B cell (primary cell): ENCODE measurements at regions of chr19 and their contacts with region 1.

Region 1: DNA sequence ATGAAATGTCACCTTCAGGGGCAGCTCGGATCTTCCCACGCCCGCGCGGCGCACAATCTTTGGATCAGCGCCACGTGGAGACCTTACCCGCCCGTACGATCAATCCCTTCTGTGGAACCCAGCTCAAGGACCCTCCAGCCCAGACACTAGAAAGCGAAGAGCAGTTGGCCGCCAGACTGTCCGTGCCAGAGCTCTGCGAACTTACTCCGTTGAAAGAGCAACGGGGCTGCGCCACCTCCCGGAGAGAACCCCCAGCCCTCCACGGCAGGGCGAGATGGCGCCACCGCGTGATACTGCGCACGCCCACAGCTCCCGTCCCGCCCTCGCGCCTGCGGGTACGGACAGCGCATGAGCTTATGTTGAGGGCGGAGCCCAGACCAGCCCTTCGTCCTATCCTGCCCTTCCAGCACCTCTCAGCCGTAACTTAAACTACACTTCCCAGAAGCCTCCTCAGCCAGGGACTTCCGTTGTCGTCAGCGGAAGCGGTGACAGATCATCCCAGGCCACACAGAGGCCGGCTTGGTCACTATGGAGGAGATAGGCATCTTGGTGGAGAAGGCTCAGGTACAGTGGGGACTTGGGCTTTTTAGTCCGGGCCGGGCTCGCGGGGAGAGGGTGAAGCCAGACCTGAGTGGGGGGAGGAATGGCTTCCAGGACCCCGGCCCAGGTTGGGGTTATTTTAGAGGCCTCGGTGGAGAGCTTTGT is at the start of gene PSMC4:
- DNase-seq: peak; percentile 99
- ATAC-seq: peak; percentile 97
- H3K4me3 ChIP-seq: peak within 1 kb of the TSS; percentile 76 to 96 (median 89)
- H3K4me3 Mint-ChIP-seq: peak within 1 kb of the TSS; percentile 92
- H3K27ac ChIP-seq: peak within 1 kb of the TSS; percentile 87 to 95
- H3K27ac Mint-ChIP-seq: peak within 1 kb of the TSS; percentile 94
- H3K4me1 ChIP-seq: peaks cover 23 to 25% of the 10 kb centered on the region in 2 donors
- H3K4me1 Mint-ChIP-seq: peaks cover 48% of the 10 kb centered on the region
- H3K27me3 ChIP-seq: no peaks in the 10 kb centered on the region
- H3K27me3 Mint-ChIP-seq: no peaks in the 10 kb centered on the region
- CTCF ChIP-seq: peak; percentile 83
- total RNA-seq, gene PSMC4: 56.6 and 58.2 TPM in 2 replicates

Region 2: DNA sequence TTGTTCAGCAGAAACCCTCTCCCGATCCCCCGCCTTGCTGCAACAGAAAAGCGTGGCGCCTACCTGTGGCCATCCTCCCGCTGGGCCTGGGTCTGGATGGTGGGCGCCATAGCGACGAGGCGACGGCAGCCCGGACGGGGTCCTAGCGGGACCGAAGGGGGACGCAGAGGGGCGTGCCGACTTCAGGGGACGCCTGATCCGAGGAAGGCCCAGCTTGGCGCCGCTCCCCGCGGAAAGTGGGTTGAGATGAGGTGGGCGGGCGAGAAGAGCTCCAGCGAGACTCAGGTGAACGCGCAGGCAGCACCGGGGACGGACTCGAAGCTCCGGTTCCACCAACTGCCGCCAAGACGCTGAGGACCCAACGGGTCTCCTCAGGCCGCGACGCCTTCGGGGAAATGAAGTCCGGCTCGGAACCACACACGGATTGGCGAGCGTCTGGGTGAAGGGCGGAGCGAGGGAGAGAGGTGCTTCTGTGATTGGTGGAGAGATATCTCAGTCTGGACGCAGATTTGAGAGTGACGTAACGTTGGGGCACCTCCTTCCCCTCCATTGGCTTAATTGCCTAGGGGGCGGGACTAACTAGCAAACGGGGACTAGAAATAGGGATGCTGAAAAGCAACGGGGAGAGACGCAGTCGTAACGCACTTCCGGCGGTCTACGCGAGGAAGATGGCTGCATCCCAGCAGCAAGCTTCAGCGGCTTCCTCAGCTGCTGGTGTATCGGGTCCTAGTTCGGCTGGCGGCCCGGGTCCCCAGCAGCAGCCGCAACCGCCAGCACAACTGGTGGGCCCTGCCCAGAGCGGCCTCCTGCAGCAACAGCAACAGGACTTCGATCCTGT is 579.9 kb before region 1 on chr19 and contains the starts of genes MED29 and PAF1:
- CTCF ChIA-PET with region 1: no interaction called
- POLR2A ChIA-PET with region 1: no interaction called
- intact Hi-C with region 1: loop called (anchors 2 kb)
- DNase-seq: peak; percentile 99
- ATAC-seq: peak; percentile 90
- H3K4me3 ChIP-seq: peak within 1 kb of the TSS; percentile 73 to 99 (median 90)
- H3K4me3 Mint-ChIP-seq: peak within 1 kb of the TSS; percentile 87
- H3K27ac ChIP-seq: peak within 1 kb of the TSS; percentile 96 to 97
- H3K27ac Mint-ChIP-seq: peak within 1 kb of the TSS; percentile 99
- H3K4me1 ChIP-seq: peaks cover 16 to 28% of the 10 kb centered on the region in 2 donors
- H3K4me1 Mint-ChIP-seq: peaks cover 39% of the 10 kb centered on the region
- H3K27me3 ChIP-seq: no peaks in the 10 kb centered on the region
- H3K27me3 Mint-ChIP-seq: no peaks in the 10 kb centered on the region
- CTCF ChIP-seq: no peak
- total RNA-seq, gene MED29: 47.5 and 53.0 TPM in 2 replicates
- total RNA-seq, gene PAF1: 54.6 and 59.9 TPM in 2 replicates

Region 3: DNA sequence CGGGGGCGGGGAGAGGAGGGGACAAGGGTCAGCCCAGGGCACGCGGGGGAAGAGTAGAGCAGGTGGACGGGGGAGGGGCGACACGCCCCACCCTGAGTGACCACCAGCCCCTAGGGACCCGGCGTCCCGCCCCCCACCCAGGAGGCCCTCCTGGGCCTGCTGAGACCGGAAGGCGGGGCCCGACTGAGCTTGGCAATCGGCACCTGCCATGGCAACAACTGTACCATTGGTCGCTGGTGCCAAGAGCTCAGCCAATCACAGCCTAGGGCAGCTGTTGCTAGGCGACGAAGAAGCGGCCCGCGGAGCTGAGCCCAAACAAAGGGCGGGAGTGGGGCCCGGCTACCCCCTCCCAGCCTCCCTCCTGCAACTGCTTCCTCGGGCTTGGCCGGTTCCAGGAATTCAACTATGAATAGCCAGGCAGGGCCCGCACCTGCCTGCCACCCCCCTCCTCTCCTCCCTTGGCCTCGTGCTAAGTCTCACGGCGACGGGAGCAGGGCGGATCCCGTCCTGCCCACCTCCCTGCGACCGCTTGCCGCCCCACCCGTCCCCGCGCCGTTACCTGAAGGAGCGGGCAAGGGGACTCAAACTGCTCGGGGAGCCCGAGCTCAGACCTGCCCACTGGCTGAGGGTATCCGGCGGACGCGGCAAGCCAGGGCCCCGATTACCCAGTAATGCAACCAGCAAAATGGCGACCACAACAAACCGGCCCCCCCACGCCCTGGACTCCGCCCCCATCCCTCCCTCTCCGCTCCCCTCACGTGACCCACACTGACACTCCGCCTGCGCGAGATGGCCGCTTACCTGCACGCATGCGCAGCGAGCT is 137.2 kb before region 1 on chr19 and contains the start of gene DYRK1B:
- CTCF ChIA-PET with region 1: interaction called, 11 read pairs
- POLR2A ChIA-PET with region 1: interaction called, 5 read pairs
- intact Hi-C with region 1: loop called (anchors 2 kb)
- DNase-seq: peak; percentile 99
- ATAC-seq: peak; percentile 84
- H3K4me3 ChIP-seq: peak within 1 kb of the TSS; percentile 66 to 100 (median 98)
- H3K4me3 Mint-ChIP-seq: peak within 1 kb of the TSS; percentile 87
- H3K27ac ChIP-seq: peak within 1 kb of the TSS; percentile 94 to 99
- H3K27ac Mint-ChIP-seq: peak within 1 kb of the TSS; percentile 92
- H3K4me1 ChIP-seq: peaks cover 16 to 26% of the 10 kb centered on the region in 2 donors
- H3K4me1 Mint-ChIP-seq: peaks cover 32% of the 10 kb centered on the region
- H3K27me3 ChIP-seq: no peaks in the 10 kb centered on the region
- H3K27me3 Mint-ChIP-seq: no peaks in the 10 kb centered on the region
- CTCF ChIP-seq: no peak
- total RNA-seq, gene DYRK1B: 36.6 and 44.4 TPM in 2 replicates

Region 4: GRCh38 chr19:39916851-39917396 is 53.9 kb before region 1 on chr19:
- CTCF ChIA-PET with region 1: interaction called, 26 read pairs
- POLR2A ChIA-PET with region 1: no interaction called
- intact Hi-C with region 1: no loop called
- DNase-seq: no peak
- ATAC-seq: no peak
- H3K4me3 ChIP-seq: no peak overlapping the region
- H3K4me3 Mint-ChIP-seq: no peak overlapping the region
- H3K27ac ChIP-seq: no peak overlapping the region
- H3K27ac Mint-ChIP-seq: no peak overlapping the region
- H3K4me1 ChIP-seq: peaks cover 0 to 10% of the 10 kb centered on the region in 2 donors
- H3K4me1 Mint-ChIP-seq: peaks cover 8% of the 10 kb centered on the region
- H3K27me3 ChIP-seq: no peaks in the 10 kb centered on the region
- H3K27me3 Mint-ChIP-seq: peaks cover 3% of the 10 kb centered on the region
- CTCF ChIP-seq: no peak

Region 5: GRCh38 chr19:39951686-39952085 is 19.1 kb before region 1 on chr19:
- CTCF ChIA-PET with region 1: interaction called, 63 read pairs
- POLR2A ChIA-PET with region 1: interaction called, 29 read pairs
- intact Hi-C with region 1: loop called (anchors 1 kb)
- DNase-seq: no peak
- ATAC-seq: no peak
- H3K4me3 ChIP-seq: peak overlapping the region in 3 of 5 experiments; percentile 3 to 23 (median 7)
- H3K4me3 Mint-ChIP-seq: peak overlapping the region; percentile 84
- H3K27ac ChIP-seq: peak overlapping the region; percentile 92 to 97
- H3K27ac Mint-ChIP-seq: peak overlapping the region; percentile 92
- H3K4me1 ChIP-seq: peaks cover 75 to 84% of the 10 kb centered on the region in 2 donors
- H3K4me1 Mint-ChIP-seq: peaks cover 68% of the 10 kb centered on the region
- H3K27me3 ChIP-seq: no peaks in the 10 kb centered on the region
- H3K27me3 Mint-ChIP-seq: no peaks in the 10 kb centered on the region
- CTCF ChIP-seq: no peak

Region 6: GRCh38 chr19:40013991-40014390 is 43.2 kb after region 1 on chr19:
- CTCF ChIA-PET with region 1: no interaction called
- POLR2A ChIA-PET with region 1: no interaction called
- intact Hi-C with region 1: no loop called
- DNase-seq: no peak
- ATAC-seq: no peak
- H3K4me3 ChIP-seq: no peak overlapping the region
- H3K4me3 Mint-ChIP-seq: no peak overlapping the region
- H3K27ac ChIP-seq: no peak overlapping the region
- H3K27ac Mint-ChIP-seq: no peak overlapping the region
- H3K4me1 ChIP-seq: no peaks in the 10 kb centered on the region
- H3K4me1 Mint-ChIP-seq: no peaks in the 10 kb centered on the region
- H3K27me3 ChIP-seq: no peaks in the 10 kb centered on the region
- H3K27me3 Mint-ChIP-seq: no peaks in the 10 kb centered on the region
- CTCF ChIP-seq: no peak

Region 7: DNA sequence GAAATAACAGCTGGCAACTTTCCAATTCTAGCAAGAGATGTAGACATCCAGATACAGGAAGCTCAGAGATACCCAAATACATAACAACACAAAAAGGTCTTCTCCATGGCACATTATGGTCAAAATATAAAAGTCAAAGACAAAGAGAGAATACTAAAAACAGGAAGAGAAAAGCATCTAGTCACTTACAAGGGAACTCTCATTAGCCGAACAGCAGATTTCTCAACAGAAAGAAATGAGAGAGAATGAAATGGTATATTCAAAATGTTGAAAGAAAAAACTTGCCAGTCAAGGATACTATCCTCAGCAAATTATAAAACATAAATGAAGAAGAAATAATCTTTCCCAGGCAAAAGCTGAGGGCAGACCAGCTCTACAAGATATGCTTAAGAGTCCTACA is 107.5 kb after region 1 on chr19:
- CTCF ChIA-PET with region 1: no interaction called
- POLR2A ChIA-PET with region 1: no interaction called
- intact Hi-C with region 1: no loop called
- DNase-seq: no peak
- ATAC-seq: no peak
- H3K4me3 ChIP-seq: no peak overlapping the region
- H3K4me3 Mint-ChIP-seq: no peak overlapping the region
- H3K27ac ChIP-seq: no peak overlapping the region
- H3K27ac Mint-ChIP-seq: no peak overlapping the region
- H3K4me1 ChIP-seq: peaks cover 4 to 5% of the 10 kb centered on the region in 2 donors
- H3K4me1 Mint-ChIP-seq: peaks cover 9% of the 10 kb centered on the region
- H3K27me3 ChIP-seq: no peaks in the 10 kb centered on the region
- H3K27me3 Mint-ChIP-seq: no peaks in the 10 kb centered on the region
- CTCF ChIP-seq: no peak

Region 8: DNA sequence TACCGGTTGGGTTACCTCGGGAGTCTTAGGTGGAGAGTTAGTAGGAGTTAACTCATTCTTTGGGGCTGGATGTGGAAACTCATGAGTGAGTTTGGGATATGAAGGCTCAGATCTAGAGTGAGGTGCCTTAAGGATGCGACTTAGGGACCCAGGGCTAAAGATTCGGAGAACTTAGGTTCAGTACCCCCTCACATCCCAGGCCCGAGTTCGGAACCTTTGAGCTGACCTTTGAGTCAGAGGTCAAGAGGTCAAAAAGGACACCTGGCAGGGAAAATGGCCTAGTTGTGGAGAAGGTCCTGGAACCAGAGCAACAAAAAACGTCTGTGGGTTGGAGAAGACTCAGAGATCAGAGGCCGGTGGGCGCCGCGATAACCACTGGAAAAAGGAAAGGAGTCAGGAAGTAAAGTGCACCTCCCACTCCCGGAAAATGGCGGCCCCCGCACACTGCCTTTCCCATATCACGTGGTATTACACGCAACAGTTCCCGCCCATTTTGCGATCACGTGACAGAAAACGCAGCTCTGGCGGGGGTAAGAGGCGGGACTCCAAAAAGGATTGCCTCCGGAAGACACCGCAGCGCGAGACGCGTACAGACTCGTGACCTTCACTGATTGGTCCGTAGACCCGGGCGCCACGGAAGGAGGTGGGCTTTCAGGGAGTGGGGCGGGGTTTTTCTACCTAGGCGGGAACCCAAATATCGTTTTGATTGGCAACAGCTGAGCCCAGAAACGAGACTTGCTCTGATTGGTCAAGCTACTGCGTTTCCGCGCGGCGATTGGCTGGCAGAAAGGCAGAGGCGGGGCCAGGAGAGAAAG is 779.4 kb after region 1 on chr19 and contains the start of gene ACTMAP:
- CTCF ChIA-PET with region 1: no interaction called
- POLR2A ChIA-PET with region 1: interaction called, 10 read pairs
- intact Hi-C with region 1: no loop called
- DNase-seq: peak; percentile 100
- ATAC-seq: peak; percentile 88
- H3K4me3 ChIP-seq: peak within 1 kb of the TSS; percentile 86 to 98 (median 89)
- H3K4me3 Mint-ChIP-seq: peak within 1 kb of the TSS; percentile 93
- H3K27ac ChIP-seq: peak within 1 kb of the TSS; percentile 94 to 97
- H3K27ac Mint-ChIP-seq: peak within 1 kb of the TSS; percentile 95
- H3K4me1 ChIP-seq: peaks cover 29 to 54% of the 10 kb centered on the region in 2 donors
- H3K4me1 Mint-ChIP-seq: peaks cover 41% of the 10 kb centered on the region
- H3K27me3 ChIP-seq: no peaks in the 10 kb centered on the region
- H3K27me3 Mint-ChIP-seq: no peaks in the 10 kb centered on the region
- CTCF ChIP-seq: no peak
- total RNA-seq, gene ACTMAP: 9.8 and 10.2 TPM in 2 replicates